AG04449 (cell line): ENCODE measurements at regions of chr5 and their contacts with region 1.

Region 1: DNA sequence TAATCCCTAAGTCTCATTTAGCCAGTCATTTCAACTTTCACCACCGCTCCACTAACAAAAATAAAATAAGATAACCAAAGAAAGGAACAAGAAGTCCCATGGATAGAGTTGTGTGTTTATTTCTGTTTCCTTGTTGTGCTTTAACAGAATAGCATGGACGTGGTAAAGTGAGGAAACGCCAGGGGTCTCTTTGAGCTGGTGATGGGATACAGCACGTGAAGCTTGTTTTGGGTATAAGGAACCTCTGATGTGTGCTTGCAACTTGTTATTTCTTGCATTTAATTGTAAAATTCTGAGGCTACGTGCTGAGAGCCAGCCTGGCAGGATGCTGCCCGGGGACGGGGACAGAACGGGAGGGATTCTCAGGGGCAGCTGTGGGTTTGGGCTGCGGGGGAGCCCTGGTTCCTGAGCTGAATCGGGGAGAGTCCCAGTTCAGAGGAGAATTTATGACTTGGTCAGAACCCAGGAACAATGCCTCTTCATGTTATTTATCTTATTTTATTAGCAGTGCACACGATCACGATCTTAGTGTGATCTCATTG is 63.4 kb downstream of the ANKRD33B start:
- DNase-seq: no peak
- H3K4me3 ChIP-seq: peak overlapping the region; percentile 45
- CTCF ChIP-seq: no peak

Region 2: GRCh38 chr5:10577371-10578292 is 49.6 kb before region 1 on chr5:
- CTCF ChIA-PET with region 1: interaction called, 10 read pairs
- POLR2A ChIA-PET with region 1: no interaction called
- DNase-seq: no peak
- H3K4me3 ChIP-seq: no peak overlapping the region
- CTCF ChIP-seq: no peak

Region 3: GRCh38 chr5:10601246-10602030 is 25.8 kb before region 1 on chr5:
- CTCF ChIA-PET with region 1: interaction called, 24 read pairs
- POLR2A ChIA-PET with region 1: no interaction called
- DNase-seq: no peak
- H3K4me3 ChIP-seq: no peak overlapping the region; the same call in 1 of the 2 replicates
- CTCF ChIP-seq: no peak

Region 4: DNA sequence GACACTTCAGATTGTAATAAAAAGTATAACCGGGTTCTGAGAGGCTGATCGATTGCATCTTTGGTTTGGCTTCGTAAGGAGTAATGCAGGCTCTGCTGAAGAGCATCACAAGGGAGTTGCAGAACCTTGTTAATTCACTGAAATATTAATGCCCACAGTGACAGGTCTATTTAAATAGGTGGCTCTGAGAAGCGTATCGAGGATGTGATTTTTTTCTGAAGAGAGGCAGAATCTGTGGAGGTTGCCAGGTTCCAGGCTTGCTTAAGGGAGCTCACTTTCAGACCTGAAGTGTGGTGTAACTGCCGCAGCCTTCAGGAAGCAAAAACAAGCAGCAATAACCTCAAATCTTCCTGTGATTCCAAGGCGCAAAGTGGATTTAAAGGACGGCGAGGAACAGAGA is 17.0 kb after region 1 on chr5:
- CTCF ChIA-PET with region 1: interaction called, 10 read pairs
- POLR2A ChIA-PET with region 1: no interaction called
- DNase-seq: no peak
- H3K4me3 ChIP-seq: no peak overlapping the region
- CTCF ChIP-seq: no peak

Region 5: GRCh38 chr5:10689391-10690081 is 62.3 kb after region 1 on chr5:
- CTCF ChIA-PET with region 1: interaction called, 16 read pairs
- POLR2A ChIA-PET with region 1: no interaction called
- DNase-seq: no peak
- H3K4me3 ChIP-seq: no peak overlapping the region
- CTCF ChIP-seq: peak; percentile 24

Region 6: GRCh38 chr5:10789021-10789420 is 161.8 kb after region 1 on chr5:
- CTCF ChIA-PET with region 1: no interaction called
- POLR2A ChIA-PET with region 1: no interaction called
- DNase-seq: peak; percentile 75
- H3K4me3 ChIP-seq: no peak overlapping the region
- CTCF ChIP-seq: no peak

Region 7: DNA sequence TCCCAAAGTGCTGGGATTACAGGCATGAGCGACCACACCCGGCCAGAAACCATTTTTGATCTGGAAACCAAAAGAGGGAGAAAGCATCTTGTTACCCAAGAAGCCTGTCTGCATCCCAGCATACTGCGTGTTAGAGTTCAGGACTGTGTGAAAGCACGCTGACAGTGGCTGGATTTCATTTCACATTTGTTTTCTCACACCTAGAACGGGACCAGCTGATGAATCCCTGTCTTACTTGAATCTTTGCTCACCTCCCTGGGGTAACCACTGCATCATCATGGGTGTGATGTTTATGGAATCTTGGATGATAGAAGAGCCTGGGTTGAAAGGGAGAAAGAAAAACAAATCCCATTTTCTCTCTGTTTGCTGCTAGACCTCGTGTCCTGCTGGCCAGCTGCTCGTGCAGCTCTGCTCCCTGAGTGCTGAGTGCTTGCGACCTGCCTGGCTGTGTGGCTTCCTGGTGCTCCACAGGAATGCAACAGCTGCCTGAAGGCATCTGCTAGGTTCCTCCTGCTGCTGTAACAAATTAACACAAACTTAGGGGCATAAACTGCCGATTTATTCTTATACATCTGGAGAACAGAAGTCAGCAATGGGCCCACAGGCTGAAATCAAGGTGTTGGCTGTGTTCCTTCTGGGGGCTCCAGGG is 512.1 kb after region 1 on chr5:
- CTCF ChIA-PET with region 1: no interaction called
- POLR2A ChIA-PET with region 1: no interaction called
- DNase-seq: no peak
- H3K4me3 ChIP-seq: no peak overlapping the region
- CTCF ChIP-seq: no peak